Activated CD8-positive, alpha-beta T cell treated with anti-CD3 and anti-CD28 coated beads for 36 hours (primary cell): ENCODE measurements at regions of chr20 and their contacts with region 1.

Region 1: DNA sequence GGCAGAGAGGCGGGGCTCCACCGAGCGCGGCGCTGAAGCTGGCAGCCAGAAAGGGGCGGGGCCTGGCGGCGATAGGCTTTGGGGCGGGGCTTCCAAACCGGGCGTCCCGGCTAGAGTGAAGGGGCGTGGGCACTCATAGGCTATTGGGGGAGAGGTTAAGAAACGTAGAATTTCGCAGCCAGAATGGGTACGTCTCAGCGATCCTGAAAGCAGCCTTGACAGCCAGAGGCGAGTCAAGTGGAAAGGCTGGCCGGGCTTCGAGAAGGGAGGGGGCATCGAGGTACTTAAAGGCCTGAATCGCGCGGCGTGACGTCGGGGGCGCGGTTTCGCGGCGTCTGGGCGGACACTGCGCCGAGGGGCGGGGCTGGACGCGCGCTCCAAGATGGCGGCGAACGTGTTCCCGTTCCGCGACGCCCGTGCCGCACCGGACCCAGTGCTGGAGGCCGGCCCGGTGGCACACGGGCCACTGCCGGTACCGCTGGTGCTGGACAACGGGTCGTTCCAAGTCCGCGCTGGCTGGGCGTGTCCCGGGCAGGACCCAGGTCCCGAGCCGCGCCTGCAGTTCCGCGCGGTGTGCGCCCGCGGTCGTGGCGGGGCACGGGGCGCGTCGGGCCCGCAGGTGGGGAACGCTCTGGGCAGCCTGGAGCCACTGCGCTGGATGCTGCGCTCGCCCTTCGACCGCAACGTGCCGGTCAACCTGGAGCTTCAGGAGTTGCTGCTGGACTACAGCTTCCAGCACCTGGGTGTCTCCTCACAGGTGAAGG is at the start of gene ACTR5:
- DNase-seq: peak; percentile 95
- ATAC-seq: peak; percentile 95
- H3K4me3 Mint-ChIP-seq: peak within 1 kb of the TSS; percentile 96
- H3K27ac Mint-ChIP-seq: peak within 1 kb of the TSS; percentile 97
- H3K4me1 Mint-ChIP-seq: peaks cover 22% of the 10 kb centered on the region
- H3K27me3 Mint-ChIP-seq: peaks cover 4% of the 10 kb centered on the region
- CTCF ChIP-seq: no peak
- total RNA-seq, gene ACTR5: 7.1 to 7.4 TPM

Region 2: GRCh38 chr20:38645980-38646858 is 102.1 kb before region 1 on chr20:
- CTCF ChIA-PET with region 1: interaction called, 110 read pairs
- POLR2A ChIA-PET with region 1: interaction called, 3 read pairs
- intact Hi-C with region 1: loop called (anchors 1 kb)
- DNase-seq: peak; percentile 86
- ATAC-seq: peak; percentile 96
- H3K4me3 Mint-ChIP-seq: peak overlapping the region; percentile 59
- H3K27ac Mint-ChIP-seq: no peak overlapping the region
- H3K4me1 Mint-ChIP-seq: no peaks in the 10 kb centered on the region
- H3K27me3 Mint-ChIP-seq: peaks cover 25% of the 10 kb centered on the region
- CTCF ChIP-seq: peak; percentile 96

Region 3: DNA sequence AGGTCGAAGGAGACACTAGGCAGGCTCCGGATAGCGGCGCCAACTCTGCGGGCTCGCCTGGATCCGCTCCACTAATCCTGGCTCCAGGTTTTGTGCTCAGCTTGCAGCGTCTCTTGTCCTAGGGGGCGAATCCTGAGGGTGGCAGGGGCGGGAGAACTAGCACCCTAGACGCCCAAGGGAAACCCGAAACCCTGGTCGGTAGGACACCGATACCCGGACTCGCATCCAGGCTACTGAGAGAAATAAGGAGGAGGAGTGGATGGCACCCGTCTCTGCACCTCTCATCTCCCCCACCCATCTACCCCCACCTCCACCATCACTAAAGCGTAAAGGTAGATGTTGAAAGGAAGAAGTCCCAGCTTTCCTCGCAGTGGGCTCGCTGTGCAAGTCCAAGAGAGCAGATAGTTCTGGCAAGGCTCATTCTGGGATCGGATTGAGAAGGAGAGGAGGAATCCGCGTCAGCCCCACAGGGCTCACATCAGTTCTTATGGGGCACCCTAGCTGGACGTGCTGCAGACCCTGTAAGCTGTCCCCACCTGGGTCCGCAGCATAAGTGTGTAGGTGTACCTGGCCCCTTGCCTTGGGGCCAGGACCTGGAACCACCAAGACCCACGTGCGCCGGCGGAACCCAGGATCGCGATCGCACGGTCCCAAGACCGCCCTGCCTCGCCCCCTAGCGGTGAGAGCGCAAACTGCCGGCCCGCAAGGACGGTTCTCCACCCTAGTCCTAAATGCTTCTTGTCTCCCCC is 17.1 kb before region 1 on chr20:
- CTCF ChIA-PET with region 1: interaction called, 53 read pairs
- POLR2A ChIA-PET with region 1: interaction called, 3 read pairs
- intact Hi-C with region 1: no loop called
- DNase-seq: peak; percentile 86
- ATAC-seq: peak; percentile 77
- H3K4me3 Mint-ChIP-seq: peak overlapping the region; percentile 55
- H3K27ac Mint-ChIP-seq: no peak overlapping the region
- H3K4me1 Mint-ChIP-seq: peaks cover 44% of the 10 kb centered on the region
- H3K27me3 Mint-ChIP-seq: peaks cover 87% of the 10 kb centered on the region
- CTCF ChIP-seq: peak; percentile 99

Region 4: GRCh38 chr20:38759106-38759505 is 10.8 kb after region 1 on chr20:
- CTCF ChIA-PET with region 1: interaction called, 38 read pairs
- POLR2A ChIA-PET with region 1: interaction called, 5 read pairs
- intact Hi-C with region 1: no loop called
- DNase-seq: no peak
- ATAC-seq: no peak
- H3K4me3 Mint-ChIP-seq: no peak overlapping the region
- H3K27ac Mint-ChIP-seq: no peak overlapping the region
- H3K4me1 Mint-ChIP-seq: peaks cover 10% of the 10 kb centered on the region
- H3K27me3 Mint-ChIP-seq: no peaks in the 10 kb centered on the region
- CTCF ChIP-seq: no peak

Region 5: DNA sequence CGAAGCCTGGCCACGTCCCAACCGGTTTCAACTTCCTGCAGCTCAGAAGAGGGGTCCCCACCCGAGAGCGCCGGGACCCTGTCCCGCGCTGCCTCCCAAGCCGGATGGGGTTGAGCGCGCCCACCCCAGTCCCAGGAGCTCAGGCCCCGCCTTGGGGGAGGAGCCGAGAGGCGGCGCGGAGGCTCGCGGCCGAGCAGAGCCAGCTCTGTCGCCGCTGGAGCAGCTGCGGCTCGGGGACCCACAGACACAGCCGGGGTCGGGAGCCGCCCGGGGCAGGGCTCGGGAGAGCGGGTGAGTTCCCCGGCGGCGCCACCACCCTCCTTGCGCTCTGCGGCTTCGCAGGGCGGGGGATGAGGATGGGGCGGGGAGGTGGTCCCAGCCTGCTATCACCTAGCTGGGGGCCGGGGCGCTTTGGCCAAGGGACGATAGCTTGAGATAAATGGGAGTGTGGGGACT is 57.3 kb after region 1 on chr20 and contains the start of gene PPP1R16B:
- CTCF ChIA-PET with region 1: interaction called, 3 read pairs
- POLR2A ChIA-PET with region 1: no interaction called
- intact Hi-C with region 1: loop called (anchors 5 kb)
- DNase-seq: peak; percentile 90
- ATAC-seq: peak; percentile 83
- H3K4me3 Mint-ChIP-seq: peak within 1 kb of the TSS; percentile 85
- H3K27ac Mint-ChIP-seq: peak within 1 kb of the TSS; percentile 99
- H3K4me1 Mint-ChIP-seq: peaks cover 51% of the 10 kb centered on the region
- H3K27me3 Mint-ChIP-seq: no peaks in the 10 kb centered on the region
- CTCF ChIP-seq: no peak
- total RNA-seq, gene PPP1R16B: 74.9 to 81.4 TPM